ENCODE measurements at regions of chr20 and their contacts with region 1.

Region 1: GRCh38 chr20:46857061-46857831 is 37.4 kb upstream of the EYA2 start:
- DNase-seq: no peak
- H3K4me3 ChIP-seq: no peak overlapping the region
- H3K27ac ChIP-seq: no peak overlapping the region
- H3K4me1 ChIP-seq: no peaks in the 10 kb centered on the region
- CTCF ChIP-seq: no peak

Region 2: DNA sequence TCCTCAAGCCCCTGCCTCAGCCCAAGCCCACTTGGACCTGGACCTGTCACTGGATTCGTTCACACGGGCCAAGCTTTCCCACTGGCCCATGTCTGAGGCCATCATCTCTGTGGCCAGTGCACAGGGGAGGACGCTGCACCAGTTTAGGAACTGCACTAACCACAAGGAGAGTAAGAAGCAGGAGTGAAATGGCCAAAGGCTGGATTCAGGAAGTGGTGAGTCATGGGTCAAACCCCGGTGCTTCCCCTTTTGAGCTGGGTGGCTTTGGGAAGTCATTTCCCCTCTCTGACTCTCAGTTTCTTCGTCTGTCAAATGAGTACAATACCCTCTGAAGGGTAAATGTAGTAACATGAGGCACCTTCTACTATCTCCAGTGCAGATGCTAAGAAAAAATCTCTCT is 651.2 kb before region 1 on chr20:
- CTCF ChIA-PET with region 1: no interaction called
- POLR2A ChIA-PET with region 1: no interaction called
- intact Hi-C with region 1: no loop called
- DNase-seq: no peak
- H3K4me3 ChIP-seq: no peak overlapping the region
- H3K27ac ChIP-seq: no peak overlapping the region
- H3K4me1 ChIP-seq: no peaks in the 10 kb centered on the region
- CTCF ChIP-seq: no peak

Region 3: DNA sequence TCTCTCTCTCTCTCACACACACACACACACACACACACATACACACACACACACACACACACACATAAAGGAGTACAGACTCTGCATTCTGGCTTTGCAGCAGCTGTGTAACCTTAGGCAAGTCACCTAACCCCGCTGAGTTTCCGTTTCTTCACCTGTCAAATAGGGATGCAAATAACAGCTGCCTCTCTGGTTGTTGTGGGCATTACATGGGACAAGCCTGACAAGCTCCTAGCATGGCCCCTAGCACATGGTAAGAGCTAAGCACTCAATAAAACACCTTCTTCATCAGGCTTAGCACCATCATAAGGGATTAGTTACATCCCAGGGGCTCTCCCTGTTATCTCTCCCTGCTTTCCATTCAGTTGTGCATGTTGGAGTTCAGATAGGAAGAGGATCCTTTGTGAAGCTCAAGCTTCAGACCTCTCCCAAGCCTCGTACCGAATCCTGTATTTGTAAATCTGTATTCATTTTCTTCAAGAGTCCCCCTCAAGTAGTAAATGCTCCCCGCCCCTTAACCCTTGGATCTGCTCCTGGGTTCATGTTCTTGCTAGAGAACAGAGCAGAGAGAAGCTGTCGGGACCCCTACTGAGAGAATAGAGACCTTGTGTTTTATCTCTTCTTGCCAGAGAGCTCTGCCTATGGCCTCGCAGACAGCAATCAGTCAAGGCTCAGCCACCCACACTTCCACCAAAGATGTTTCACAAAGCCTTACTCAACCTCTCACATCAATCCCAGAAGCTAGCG is 208.2 kb before region 1 on chr20:
- CTCF ChIA-PET with region 1: no interaction called
- POLR2A ChIA-PET with region 1: no interaction called
- intact Hi-C with region 1: no loop called
- DNase-seq: peak; percentile 10
- H3K4me3 ChIP-seq: no peak overlapping the region
- H3K27ac ChIP-seq: no peak overlapping the region
- H3K4me1 ChIP-seq: no peaks in the 10 kb centered on the region
- CTCF ChIP-seq: no peak

Region 4: GRCh38 chr20:46883892-46884291 is 26.6 kb after region 1 on chr20:
- CTCF ChIA-PET with region 1: no interaction called
- POLR2A ChIA-PET with region 1: no interaction called
- intact Hi-C with region 1: no loop called
- DNase-seq: no peak
- H3K4me3 ChIP-seq: no peak overlapping the region
- H3K27ac ChIP-seq: no peak overlapping the region
- H3K4me1 ChIP-seq: no peaks in the 10 kb centered on the region
- CTCF ChIP-seq: no peak

Region 5: GRCh38 chr20:47296950-47297349 is 439.7 kb after region 1 on chr20:
- CTCF ChIA-PET with region 1: no interaction called
- POLR2A ChIA-PET with region 1: no interaction called
- intact Hi-C with region 1: loop called (anchors 5 kb)
- DNase-seq: no peak
- H3K4me3 ChIP-seq: no peak overlapping the region
- H3K27ac ChIP-seq: no peak overlapping the region
- H3K4me1 ChIP-seq: no peaks in the 10 kb centered on the region
- CTCF ChIP-seq: peak; percentile 49

Measured in OCI-LY7 (cell line).